MCF 10A (cell line): ENCODE measurements at regions of chr14 and their contacts with region 1.

Region 1: GRCh38 chr14:32509632-32510187 is 180.6 kb downstream of the AKAP6 start:
- DNase-seq: peak; percentile 94
- H3K4me3 Mint-ChIP-seq: peak overlapping the region; percentile 65
- H3K27ac Mint-ChIP-seq: peak overlapping the region; percentile 93
- H3K4me1 Mint-ChIP-seq: peaks cover 50% of the 10 kb centered on the region
- H3K27me3 Mint-ChIP-seq: no peaks in the 10 kb centered on the region
- CTCF ChIP-seq: no peak

Region 2: GRCh38 chr14:32259368-32260013 is 250.2 kb before region 1 on chr14:
- CTCF ChIA-PET with region 1: interaction called, 31 read pairs
- POLR2A ChIA-PET with region 1: interaction called, 7 read pairs
- intact Hi-C with region 1: loop called (anchors 2 kb)
- DNase-seq: peak; percentile 73
- H3K4me3 Mint-ChIP-seq: no peak overlapping the region
- H3K27ac Mint-ChIP-seq: peak overlapping the region; percentile 14
- H3K4me1 Mint-ChIP-seq: peaks cover 11% of the 10 kb centered on the region
- H3K27me3 Mint-ChIP-seq: no peaks in the 10 kb centered on the region
- CTCF ChIP-seq: no peak

Region 3: GRCh38 chr14:32469388-32470160 is 40.1 kb before region 1 on chr14:
- CTCF ChIA-PET with region 1: interaction called, 87 read pairs
- POLR2A ChIA-PET with region 1: interaction called, 170 read pairs
- intact Hi-C with region 1: loop called (anchors 1 kb)
- DNase-seq: peak; percentile 50
- H3K4me3 Mint-ChIP-seq: no peak overlapping the region
- H3K27ac Mint-ChIP-seq: peak overlapping the region; percentile 76
- H3K4me1 Mint-ChIP-seq: peaks cover 47% of the 10 kb centered on the region
- H3K27me3 Mint-ChIP-seq: no peaks in the 10 kb centered on the region
- CTCF ChIP-seq: peak; percentile 45

Region 4: GRCh38 chr14:32480337-32480736 is 29.4 kb before region 1 on chr14:
- CTCF ChIA-PET with region 1: interaction called, 13 read pairs
- POLR2A ChIA-PET with region 1: interaction called, 9 read pairs
- intact Hi-C with region 1: no loop called
- DNase-seq: no peak
- H3K4me3 Mint-ChIP-seq: no peak overlapping the region
- H3K27ac Mint-ChIP-seq: no peak overlapping the region
- H3K4me1 Mint-ChIP-seq: peaks cover 11% of the 10 kb centered on the region
- H3K27me3 Mint-ChIP-seq: no peaks in the 10 kb centered on the region
- CTCF ChIP-seq: no peak

Region 5: DNA sequence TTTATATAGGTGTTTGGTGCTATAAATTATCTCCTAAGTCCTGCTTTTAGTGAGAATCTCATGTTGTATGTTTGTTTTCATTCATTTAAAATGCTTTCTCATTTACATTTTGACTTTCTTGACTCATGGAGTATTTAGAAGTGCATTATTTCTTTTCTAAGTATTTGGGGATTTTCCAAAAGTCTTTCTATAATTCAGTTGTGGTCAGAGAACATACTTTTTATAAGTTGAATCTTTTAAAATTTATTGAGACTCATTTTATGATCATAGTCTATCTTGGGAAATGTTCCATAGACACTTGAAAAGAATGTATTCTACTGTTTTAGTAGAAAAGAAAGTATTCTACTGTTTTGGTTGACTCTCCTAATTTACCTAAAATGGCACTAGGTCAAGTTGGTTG is 12.5 kb before region 1 on chr14:
- CTCF ChIA-PET with region 1: interaction called, 6 read pairs
- POLR2A ChIA-PET with region 1: interaction called, 11 read pairs
- intact Hi-C with region 1: no loop called
- DNase-seq: no peak
- H3K4me3 Mint-ChIP-seq: no peak overlapping the region
- H3K27ac Mint-ChIP-seq: no peak overlapping the region
- H3K4me1 Mint-ChIP-seq: peaks cover under 1% of the 10 kb centered on the region
- H3K27me3 Mint-ChIP-seq: no peaks in the 10 kb centered on the region
- CTCF ChIP-seq: no peak

Region 6: GRCh38 chr14:32525591-32525990 is 15.9 kb after region 1 on chr14:
- CTCF ChIA-PET with region 1: interaction called, 12 read pairs
- POLR2A ChIA-PET with region 1: interaction called, 6 read pairs
- intact Hi-C with region 1: no loop called
- DNase-seq: no peak
- H3K4me3 Mint-ChIP-seq: no peak overlapping the region
- H3K27ac Mint-ChIP-seq: no peak overlapping the region
- H3K4me1 Mint-ChIP-seq: peaks cover 4% of the 10 kb centered on the region
- H3K27me3 Mint-ChIP-seq: no peaks in the 10 kb centered on the region
- CTCF ChIP-seq: no peak

Region 7: DNA sequence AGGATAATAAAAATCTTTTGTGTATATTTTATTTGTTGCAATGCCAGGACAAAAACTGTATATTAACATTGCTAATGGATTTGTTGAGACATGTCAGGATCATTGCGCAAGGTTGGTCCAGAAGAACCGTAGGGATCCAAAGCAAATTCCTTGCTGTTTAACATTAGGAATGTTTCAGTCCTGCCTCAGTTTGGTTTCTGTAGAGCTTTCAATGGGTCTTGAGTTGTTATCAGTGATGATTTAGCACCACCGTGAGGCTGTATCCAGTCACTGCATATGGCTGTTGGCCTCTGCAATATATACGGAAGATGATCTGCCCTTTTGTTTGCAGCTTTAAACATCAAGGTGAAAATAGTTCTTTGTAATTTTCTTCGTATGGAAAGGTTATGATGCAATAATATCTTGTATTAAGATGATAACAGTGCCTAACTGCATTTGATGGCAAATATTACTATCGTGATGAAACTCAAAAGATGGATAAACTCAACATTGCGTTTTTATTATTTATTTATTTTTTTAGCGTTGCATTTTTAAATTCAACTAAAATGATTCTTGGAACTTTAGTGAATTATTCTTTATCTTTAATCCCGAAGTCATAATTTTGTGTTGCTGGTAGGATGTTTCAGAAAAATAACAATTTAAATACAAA is 50.6 kb after region 1 on chr14:
- CTCF ChIA-PET with region 1: interaction called, 13 read pairs
- POLR2A ChIA-PET with region 1: interaction called, 13 read pairs
- intact Hi-C with region 1: no loop called
- DNase-seq: peak; percentile 85
- H3K4me3 Mint-ChIP-seq: no peak overlapping the region
- H3K27ac Mint-ChIP-seq: no peak overlapping the region
- H3K4me1 Mint-ChIP-seq: peaks cover 10% of the 10 kb centered on the region
- H3K27me3 Mint-ChIP-seq: no peaks in the 10 kb centered on the region
- CTCF ChIP-seq: peak; percentile 77

Region 8: DNA sequence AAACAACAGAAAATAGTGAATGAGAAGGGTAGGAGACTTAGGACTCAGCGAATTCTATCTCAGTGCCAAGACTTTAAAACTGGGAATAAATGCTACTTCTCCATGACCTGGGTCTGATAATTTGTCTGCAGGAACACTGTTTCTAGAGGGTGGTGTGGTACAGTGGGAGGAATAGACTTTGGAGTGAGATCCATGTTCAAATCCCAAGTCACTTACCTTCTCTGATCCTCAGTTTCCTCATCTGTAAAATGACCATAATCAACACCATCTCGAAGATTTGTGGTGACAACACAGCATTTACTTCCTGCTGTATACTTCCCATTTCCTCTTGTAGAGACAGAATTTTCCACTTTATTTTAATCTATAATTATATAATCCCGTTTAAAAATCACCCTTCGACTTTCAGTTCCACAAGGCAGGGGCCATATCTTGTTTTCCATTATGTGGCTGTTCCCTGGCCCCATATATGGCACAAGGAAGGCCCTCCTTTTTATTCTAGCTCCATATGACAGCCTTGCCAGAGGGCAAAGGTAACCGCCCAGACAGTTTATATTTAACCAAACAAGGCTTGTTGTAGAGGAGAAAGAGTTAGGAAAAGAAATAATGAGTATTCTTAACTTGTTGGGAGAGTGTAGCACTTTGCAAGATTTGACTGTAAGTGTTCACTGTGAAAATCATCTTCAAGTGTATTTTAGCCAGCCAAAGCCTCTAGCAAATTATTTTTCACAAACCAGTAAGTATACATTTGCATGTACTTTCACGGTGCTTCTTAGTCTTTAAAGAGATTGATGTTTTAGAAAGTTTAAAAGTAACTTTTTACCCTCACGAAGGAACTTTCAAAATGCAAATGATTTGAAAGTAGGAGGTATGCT is 62.5 kb after region 1 on chr14:
- CTCF ChIA-PET with region 1: no interaction called
- POLR2A ChIA-PET with region 1: no interaction called
- intact Hi-C with region 1: no loop called
- DNase-seq: no peak
- H3K4me3 Mint-ChIP-seq: no peak overlapping the region
- H3K27ac Mint-ChIP-seq: no peak overlapping the region
- H3K4me1 Mint-ChIP-seq: peaks cover 6% of the 10 kb centered on the region
- H3K27me3 Mint-ChIP-seq: peaks cover 13% of the 10 kb centered on the region
- CTCF ChIP-seq: no peak